PC-9 (cell line): ENCODE measurements at regions of chr1 and their contacts with region 1.

Region 1: DNA sequence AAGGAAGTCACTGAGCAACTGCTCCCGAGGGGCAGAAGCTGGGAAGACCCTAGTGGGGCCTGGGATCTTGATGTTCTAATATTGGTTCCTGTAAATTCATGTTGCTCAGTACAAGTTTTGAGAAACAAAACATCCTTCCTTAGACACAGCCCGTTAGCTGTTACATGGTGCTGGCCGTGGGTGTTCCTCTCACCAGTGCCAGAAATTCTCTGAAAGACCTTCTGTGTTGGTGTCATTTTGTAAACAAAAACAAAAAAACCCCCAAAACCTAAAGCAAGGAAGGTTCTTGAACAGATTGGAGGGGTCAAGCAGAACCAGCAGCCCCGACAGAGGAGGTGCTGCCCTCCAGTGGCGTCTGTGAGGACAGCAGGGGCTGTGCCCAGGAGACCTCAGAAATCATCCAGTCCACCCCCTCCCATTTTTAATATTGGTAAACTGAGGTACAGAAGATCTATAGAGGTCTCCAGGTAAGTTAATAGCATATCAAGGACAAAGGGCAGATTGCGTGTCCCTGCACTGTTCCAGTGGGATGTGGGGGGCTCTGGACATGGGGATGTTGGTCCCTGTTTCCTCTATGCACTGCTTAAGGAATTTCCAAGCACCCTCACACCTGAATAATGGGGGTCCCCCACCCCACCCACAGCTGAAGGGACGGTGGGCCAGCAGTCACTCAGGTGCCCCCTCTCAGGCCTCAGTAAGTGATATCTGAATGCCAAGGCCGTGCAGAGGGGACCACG is 38.2 kb downstream of the SLC2A7 start:
- DNase-seq: peak in 1 of 2 experiments; percentile 44
- H3K4me3 ChIP-seq: no peak overlapping the region
- H3K27ac ChIP-seq: no peak overlapping the region
- H3K4me1 ChIP-seq: peaks cover 6% of the 10 kb centered on the region; the same call in 1 of the 2 replicates
- H3K27me3 ChIP-seq: no peaks in the 10 kb centered on the region
- CTCF ChIP-seq: peak; percentile 82

Region 2: GRCh38 chr1:7961216-7962015 is 1026.6 kb before region 1 on chr1 and contains the start of gene PARK7:
- CTCF ChIA-PET with region 1: no interaction called
- POLR2A ChIA-PET with region 1: no interaction called
- intact Hi-C with region 1: loop called (anchors 10 kb)
- DNase-seq: peak; percentile 96 to 100
- H3K4me3 ChIP-seq: peak within 1 kb of the TSS; percentile 96
- H3K27ac ChIP-seq: peak within 1 kb of the TSS; percentile 70
- H3K4me1 ChIP-seq: peaks cover 15% of the 10 kb centered on the region
- H3K27me3 ChIP-seq: no peaks in the 10 kb centered on the region
- CTCF ChIP-seq: peak; percentile 43; the same call in 1 of the 2 replicates
- total RNA-seq, gene PARK7: 242 and 291 TPM in 2 replicates

Region 3: DNA sequence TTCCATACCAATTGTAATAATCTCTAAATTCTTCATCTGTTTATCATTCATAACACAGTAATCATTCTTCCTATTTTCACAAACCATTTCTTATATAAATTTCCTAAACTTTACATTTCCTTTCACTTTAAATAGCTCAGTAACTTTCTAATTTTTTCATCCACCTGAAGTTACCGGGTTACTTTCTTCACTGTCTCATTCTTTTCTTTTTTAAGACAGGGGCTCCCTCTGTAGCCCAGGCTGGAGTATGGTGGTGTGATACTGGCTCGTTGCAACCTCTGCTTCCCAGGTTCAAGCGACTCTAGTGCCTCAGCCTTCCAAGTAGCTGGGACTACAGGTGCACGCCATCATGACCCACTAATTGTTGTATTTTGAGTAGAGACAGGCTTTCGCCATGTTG is 211.9 kb before region 1 on chr1:
- CTCF ChIA-PET with region 1: no interaction called
- POLR2A ChIA-PET with region 1: no interaction called
- intact Hi-C with region 1: no loop called
- DNase-seq: no peak
- H3K4me3 ChIP-seq: no peak overlapping the region
- H3K27ac ChIP-seq: no peak overlapping the region
- H3K4me1 ChIP-seq: no peaks in the 10 kb centered on the region
- H3K27me3 ChIP-seq: no peaks in the 10 kb centered on the region
- CTCF ChIP-seq: no peak

Region 4: DNA sequence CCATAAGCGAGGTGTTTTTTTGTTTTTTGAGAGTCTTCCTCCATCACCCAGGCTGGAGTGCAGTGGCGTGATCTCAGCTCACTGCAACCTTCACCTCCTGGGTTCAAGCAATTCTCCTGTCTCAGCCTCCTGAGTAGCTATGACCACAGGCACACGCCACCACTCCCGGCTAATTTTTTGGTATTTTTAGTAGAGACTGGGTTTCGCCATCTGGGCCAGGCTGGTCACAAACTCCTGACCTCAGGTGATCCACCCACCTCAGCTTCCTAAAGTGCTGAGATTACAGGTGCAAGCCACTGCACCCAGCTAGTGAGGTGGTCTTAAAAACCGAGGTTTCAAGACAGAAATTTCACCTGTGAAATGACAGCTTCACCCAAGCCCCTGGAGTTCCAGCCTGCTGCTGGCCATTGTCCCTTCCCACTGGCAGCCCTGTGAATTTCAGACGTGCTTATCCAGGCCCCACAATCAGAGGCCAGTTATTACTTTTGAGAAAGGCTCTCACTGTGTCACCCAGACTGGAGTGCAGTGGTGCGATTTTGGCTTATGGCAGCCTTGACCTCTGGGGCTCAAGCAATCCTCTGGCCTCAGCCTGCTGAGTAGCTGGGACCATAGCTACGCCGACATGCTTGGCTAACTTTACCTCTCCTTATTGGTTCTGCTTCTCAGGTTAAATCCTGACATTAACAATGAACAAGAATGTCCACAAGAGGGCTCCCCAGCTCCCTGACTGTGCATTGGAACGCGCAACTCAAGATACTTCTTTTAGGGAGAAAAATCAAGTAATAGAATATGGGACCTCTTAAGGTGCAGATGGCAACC is 129.0 kb before region 1 on chr1:
- CTCF ChIA-PET with region 1: no interaction called
- POLR2A ChIA-PET with region 1: no interaction called
- intact Hi-C with region 1: loop called (anchors 1 kb)
- DNase-seq: peak; percentile 31 to 48
- H3K4me3 ChIP-seq: no peak overlapping the region
- H3K27ac ChIP-seq: 0 out of 2 replicates have a peak overlapping the region, but pooled peaks have one; percentile 2
- H3K4me1 ChIP-seq: 0 out of 2 replicates have a peak, but pooled peaks cover 5% of the 10 kb centered on the region
- H3K27me3 ChIP-seq: no peaks in the 10 kb centered on the region
- CTCF ChIP-seq: peak; percentile 69

Region 5: GRCh38 chr1:8915446-8915845 is 72.6 kb before region 1 on chr1:
- CTCF ChIA-PET with region 1: interaction called, 3 read pairs
- POLR2A ChIA-PET with region 1: no interaction called
- intact Hi-C with region 1: loop called (anchors 5 kb)
- DNase-seq: no peak
- H3K4me3 ChIP-seq: no peak overlapping the region
- H3K27ac ChIP-seq: no peak overlapping the region
- H3K4me1 ChIP-seq: no peaks in the 10 kb centered on the region
- H3K27me3 ChIP-seq: no peaks in the 10 kb centered on the region
- CTCF ChIP-seq: no peak

Region 6: DNA sequence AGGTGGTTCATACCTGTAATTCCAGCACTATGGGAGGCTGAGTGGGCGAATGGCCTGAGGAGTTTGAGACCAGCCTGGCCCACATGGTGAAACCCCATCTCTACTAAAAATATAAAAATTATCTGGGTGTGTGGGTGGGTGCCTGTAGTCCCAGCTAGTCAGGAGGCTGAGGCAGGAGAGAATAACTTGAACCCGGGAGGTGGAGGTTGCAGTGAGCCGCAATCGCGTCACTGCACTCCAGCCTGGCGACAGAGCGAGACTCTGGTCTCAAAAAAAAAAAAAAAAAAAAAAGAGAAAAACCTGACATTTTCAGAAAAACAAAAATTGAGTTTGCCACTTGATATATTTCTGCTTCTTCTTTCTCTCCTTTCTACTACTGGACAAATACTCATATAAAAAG is 18.1 kb before region 1 on chr1:
- CTCF ChIA-PET with region 1: no interaction called
- POLR2A ChIA-PET with region 1: interaction called, 26 read pairs
- intact Hi-C with region 1: no loop called
- DNase-seq: no peak
- H3K4me3 ChIP-seq: no peak overlapping the region
- H3K27ac ChIP-seq: no peak overlapping the region
- H3K4me1 ChIP-seq: no peaks in the 10 kb centered on the region
- H3K27me3 ChIP-seq: no peaks in the 10 kb centered on the region
- CTCF ChIP-seq: no peak